PC-9 (cell line): ENCODE measurements at regions of chr11 and their contacts with region 1.

Region 1: GRCh38 chr11:57667736-57668435 is at the start of gene ZDHHC5:
- DNase-seq: peak; percentile 98 to 100
- H3K4me3 ChIP-seq: peak within 1 kb of the TSS; percentile 84
- H3K27ac ChIP-seq: peak within 1 kb of the TSS; percentile 91
- H3K4me1 ChIP-seq: peaks cover 26% of the 10 kb centered on the region
- H3K27me3 ChIP-seq: no peaks in the 10 kb centered on the region
- CTCF ChIP-seq: peak; percentile 56; the same call in 1 of the 2 replicates
- total RNA-seq, gene ZDHHC5: 94.2 and 101 TPM in 2 replicates

Region 2: GRCh38 chr11:57657194-57658022 is 10.5 kb before region 1 on chr11 and contains the start of gene CLP1:
- CTCF ChIA-PET with region 1: interaction called, 3 read pairs
- POLR2A ChIA-PET with region 1: no interaction called
- intact Hi-C with region 1: loop called (anchors 1 kb)
- DNase-seq: peak; percentile 98 to 100
- H3K4me3 ChIP-seq: peak within 1 kb of the TSS; percentile 96
- H3K27ac ChIP-seq: peak within 1 kb of the TSS; percentile 25
- H3K4me1 ChIP-seq: peaks cover 7% of the 10 kb centered on the region
- H3K27me3 ChIP-seq: no peaks in the 10 kb centered on the region
- CTCF ChIP-seq: peak; percentile 13; the same call in 1 of the 2 replicates
- total RNA-seq, gene CLP1: 23.4 and 24.2 TPM in 2 replicates

Region 3: DNA sequence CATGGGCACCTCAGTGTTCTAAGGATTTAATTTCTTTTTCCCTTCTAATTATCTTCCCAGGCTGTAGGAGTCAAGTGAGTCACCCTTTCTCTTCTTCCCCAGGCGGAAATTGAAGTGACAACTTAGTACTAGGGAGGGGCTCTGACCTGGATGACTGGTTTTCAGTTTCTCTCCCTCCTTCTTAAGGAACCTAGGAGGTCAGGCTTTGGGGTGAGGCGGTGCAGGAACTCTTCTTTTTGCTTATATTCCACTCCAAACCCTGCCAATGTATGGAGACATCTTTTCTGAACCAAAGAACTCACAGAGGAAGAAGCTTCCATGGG is 12.6 kb after region 1 on chr11:
- CTCF ChIA-PET with region 1: no interaction called
- POLR2A ChIA-PET with region 1: no interaction called
- intact Hi-C with region 1: no loop called
- DNase-seq: peak; percentile 48 to 89
- H3K4me3 ChIP-seq: no peak overlapping the region; the same call in 1 of the 2 replicates
- H3K27ac ChIP-seq: peak overlapping the region; percentile 81
- H3K4me1 ChIP-seq: peaks cover 35% of the 10 kb centered on the region
- H3K27me3 ChIP-seq: no peaks in the 10 kb centered on the region
- CTCF ChIP-seq: no peak

Region 4: GRCh38 chr11:57761301-57762234 is 93.7 kb after region 1 on chr11 and contains the start of gene CTNND1:
- CTCF ChIA-PET with region 1: no interaction called
- POLR2A ChIA-PET with region 1: no interaction called
- intact Hi-C with region 1: loop called (anchors 1 kb)
- DNase-seq: peak; percentile 92 to 96
- H3K4me3 ChIP-seq: peak within 1 kb of the TSS; percentile 100
- H3K27ac ChIP-seq: peak within 1 kb of the TSS; percentile 98
- H3K4me1 ChIP-seq: peaks cover 30% of the 10 kb centered on the region
- H3K27me3 ChIP-seq: no peaks in the 10 kb centered on the region
- CTCF ChIP-seq: no peak
- total RNA-seq, gene CTNND1: 340 and 413 TPM in 2 replicates

Region 5: DNA sequence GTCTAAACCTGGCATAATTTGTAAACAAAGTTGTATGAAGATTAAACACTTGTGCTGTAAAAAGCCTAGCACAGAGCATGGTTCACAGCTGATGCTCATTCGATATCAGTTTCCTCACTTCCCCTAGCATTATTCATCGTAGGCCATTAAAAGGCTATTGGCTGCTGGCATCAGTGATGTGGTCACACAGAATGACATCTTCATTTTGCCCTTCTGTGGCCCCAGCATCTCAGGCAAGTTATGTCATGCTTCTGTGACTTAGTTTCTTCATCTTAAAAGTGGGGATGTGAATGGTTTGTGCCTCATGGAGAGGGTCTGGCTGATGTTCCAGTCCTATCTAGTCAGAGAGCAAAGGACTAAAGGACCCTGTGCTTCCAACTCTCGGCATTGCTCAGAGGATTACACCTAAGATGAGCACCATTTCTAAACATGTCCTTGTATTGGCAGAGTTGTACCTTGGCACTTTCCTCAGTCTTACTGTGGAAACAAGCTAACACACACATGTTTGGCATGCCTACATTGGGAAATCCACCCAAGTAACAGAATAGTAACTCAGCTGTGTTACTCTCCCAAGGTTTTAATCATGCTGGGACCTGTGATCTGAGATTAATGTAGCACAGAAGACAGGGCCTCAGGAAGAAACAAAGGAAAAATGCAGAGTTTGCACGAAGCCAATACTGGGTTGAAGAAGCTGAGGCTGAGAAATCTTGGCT is 272.3 kb after region 1 on chr11:
- CTCF ChIA-PET with region 1: no interaction called
- POLR2A ChIA-PET with region 1: no interaction called
- intact Hi-C with region 1: no loop called
- DNase-seq: no peak
- H3K4me3 ChIP-seq: no peak overlapping the region
- H3K27ac ChIP-seq: no peak overlapping the region
- H3K4me1 ChIP-seq: no peaks in the 10 kb centered on the region
- H3K27me3 ChIP-seq: peaks cover 61% of the 10 kb centered on the region
- CTCF ChIP-seq: no peak

Region 6: DNA sequence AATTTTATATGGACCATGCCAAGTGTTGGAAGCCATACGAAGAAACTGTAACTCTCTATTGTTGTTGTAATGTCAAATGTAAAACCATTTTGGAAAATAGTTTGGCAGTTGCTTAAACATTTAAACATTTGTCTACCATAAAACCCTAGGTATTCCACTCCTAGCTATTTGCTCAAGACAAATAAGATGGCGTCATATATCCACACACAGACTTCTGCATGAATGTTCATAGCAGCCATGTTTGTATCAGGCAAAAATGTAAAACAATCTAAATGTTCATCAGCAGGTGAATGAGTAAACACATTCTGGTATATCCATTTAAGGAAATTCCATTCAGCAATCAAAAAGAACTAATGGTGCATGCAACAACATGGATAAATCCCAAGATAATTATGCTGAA is 429.6 kb after region 1 on chr11:
- CTCF ChIA-PET with region 1: no interaction called
- POLR2A ChIA-PET with region 1: no interaction called
- intact Hi-C with region 1: no loop called
- DNase-seq: no peak
- H3K4me3 ChIP-seq: no peak overlapping the region
- H3K27ac ChIP-seq: no peak overlapping the region
- H3K4me1 ChIP-seq: no peaks in the 10 kb centered on the region
- H3K27me3 ChIP-seq: no peaks in the 10 kb centered on the region
- CTCF ChIP-seq: no peak

Region 7: GRCh38 chr11:58133309-58134076 is 465.6 kb after region 1 on chr11:
- CTCF ChIA-PET with region 1: no interaction called
- POLR2A ChIA-PET with region 1: no interaction called
- intact Hi-C with region 1: no loop called
- DNase-seq: no peak
- H3K4me3 ChIP-seq: no peak overlapping the region
- H3K27ac ChIP-seq: no peak overlapping the region
- H3K4me1 ChIP-seq: no peaks in the 10 kb centered on the region
- H3K27me3 ChIP-seq: no peaks in the 10 kb centered on the region
- CTCF ChIP-seq: no peak

Region 8: GRCh38 chr11:58286249-58286648 is 618.4 kb after region 1 on chr11:
- CTCF ChIA-PET with region 1: no interaction called
- POLR2A ChIA-PET with region 1: no interaction called
- intact Hi-C with region 1: loop called (anchors 2 kb)
- DNase-seq: no peak
- H3K4me3 ChIP-seq: no peak overlapping the region
- H3K27ac ChIP-seq: no peak overlapping the region
- H3K4me1 ChIP-seq: no peaks in the 10 kb centered on the region
- H3K27me3 ChIP-seq: no peaks in the 10 kb centered on the region
- CTCF ChIP-seq: peak; percentile 62

Region 9: DNA sequence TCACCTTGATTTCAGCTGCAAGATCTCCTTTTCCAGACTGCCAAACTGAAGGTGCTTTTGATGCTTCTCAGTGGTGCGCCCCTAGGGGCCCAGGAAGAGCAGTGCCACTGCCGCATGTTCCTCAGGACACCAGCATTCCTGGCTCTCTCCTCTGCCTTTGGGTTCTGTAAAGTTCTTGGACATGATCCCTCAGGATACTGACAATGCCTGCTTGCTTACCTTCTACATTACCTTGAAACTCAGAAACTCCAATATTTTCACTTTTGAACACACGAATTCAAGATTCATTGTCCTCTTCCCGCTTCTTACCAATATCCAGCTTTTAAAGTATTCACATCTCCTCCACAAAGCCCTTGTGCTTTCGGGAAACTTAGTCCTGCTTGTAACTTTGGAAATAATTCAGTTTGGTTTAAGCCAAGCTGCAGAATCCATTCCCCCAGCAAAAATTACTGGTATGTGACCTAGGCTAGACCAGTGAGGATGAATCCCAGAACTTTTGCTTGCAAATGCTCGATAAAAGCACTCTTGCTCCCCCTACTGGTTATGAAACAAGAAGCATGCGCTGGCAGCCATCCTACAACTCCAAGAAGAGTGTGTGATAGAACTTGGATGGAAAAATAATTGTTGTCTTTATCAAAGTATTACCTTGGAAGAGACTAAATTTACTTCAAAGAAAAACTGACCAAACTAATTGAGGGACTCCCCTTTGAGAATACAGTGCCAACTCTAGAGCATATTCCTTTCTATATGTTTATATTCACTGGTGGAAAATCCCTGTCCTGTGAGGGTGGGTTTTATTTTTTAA is 856.5 kb after region 1 on chr11:
- CTCF ChIA-PET with region 1: interaction called, 11 read pairs
- POLR2A ChIA-PET with region 1: no interaction called
- intact Hi-C with region 1: no loop called
- DNase-seq: peak; percentile 58
- H3K4me3 ChIP-seq: no peak overlapping the region
- H3K27ac ChIP-seq: no peak overlapping the region
- H3K4me1 ChIP-seq: no peaks in the 10 kb centered on the region
- H3K27me3 ChIP-seq: 0 out of 2 replicates have a peak, but pooled peaks cover 1% of the 10 kb centered on the region
- CTCF ChIP-seq: peak; percentile 92